Ascending aorta (tissue), 2 donors: ENCODE measurements at regions of chr10 and their contacts with region 1.

Region 1: GRCh38 chr10:71963756-71964668 is at the start of gene CHST3:
- DNase-seq: peak in 1 of 2 donors; percentile 78
- H3K4me3 ChIP-seq: peak within 1 kb of the TSS; percentile 88 to 99
- H3K27ac ChIP-seq: peak within 1 kb of the TSS; percentile 100
- H3K4me1 ChIP-seq: peaks cover 0 to 36% of the 10 kb centered on the region in 2 donors
- H3K27me3 ChIP-seq: no peaks in the 10 kb centered on the region
- CTCF ChIP-seq: peak in 1 of 3 experiments; percentile 1
- total RNA-seq, gene CHST3: 41.4 TPM

Region 2: GRCh38 chr10:71805776-71806703 is 158.0 kb before region 1 on chr10:
- intact Hi-C with region 1: no loop called
- DNase-seq: no peak
- H3K4me3 ChIP-seq: no peak overlapping the region
- H3K27ac ChIP-seq: no peak overlapping the region
- H3K4me1 ChIP-seq: no peaks in the 10 kb centered on the region
- H3K27me3 ChIP-seq: no peaks in the 10 kb centered on the region
- CTCF ChIP-seq: no peak

Region 3: DNA sequence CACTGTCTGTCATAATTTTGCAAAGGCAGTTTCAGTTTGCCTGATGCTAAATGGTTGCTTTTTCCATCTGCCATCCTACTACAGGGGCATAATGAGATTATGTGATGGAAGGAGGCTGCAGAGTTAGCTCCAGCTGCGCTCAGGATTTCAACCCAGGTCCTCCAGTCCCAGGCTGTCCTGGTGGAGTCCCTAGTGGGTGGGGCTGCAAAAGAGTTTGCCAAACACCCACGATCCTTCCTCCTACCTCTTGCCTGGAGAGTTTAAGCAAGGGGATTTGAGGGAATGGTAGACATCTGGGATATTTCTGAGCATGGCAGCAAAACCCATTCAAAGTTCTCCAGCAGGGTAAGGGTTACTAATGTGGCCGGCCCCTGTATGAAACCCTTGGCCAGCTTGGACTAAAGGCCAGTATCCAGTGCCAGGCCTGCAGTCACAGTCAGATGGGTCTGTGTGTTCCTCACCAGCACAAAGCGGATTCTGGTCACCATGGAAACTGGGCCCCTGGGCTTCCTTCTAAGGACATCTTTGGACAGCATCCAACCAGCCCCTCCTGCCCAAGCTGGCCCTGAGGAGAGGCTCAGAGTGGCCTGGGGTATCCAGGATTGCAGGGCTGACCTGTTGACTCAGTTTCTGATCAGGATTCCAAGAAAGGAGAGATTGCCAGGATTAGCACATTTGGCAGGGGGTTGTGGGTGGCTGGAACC is 42.5 kb before region 1 on chr10:
- intact Hi-C with region 1: no loop called
- DNase-seq: peak in 1 of 2 donors; percentile 84
- H3K4me3 ChIP-seq: no peak overlapping the region
- H3K27ac ChIP-seq: no peak overlapping the region
- H3K4me1 ChIP-seq: no peaks in the 10 kb centered on the region
- H3K27me3 ChIP-seq: no peaks in the 10 kb centered on the region
- CTCF ChIP-seq: no peak

Region 4: GRCh38 chr10:71974489-71975021 is 10.5 kb after region 1 on chr10:
- intact Hi-C with region 1: loop called (anchors 1 kb)
- DNase-seq: peak in 1 of 2 donors; percentile 85
- H3K4me3 ChIP-seq: peak overlapping the region in 1 of 2 donors; percentile 40
- H3K27ac ChIP-seq: peak overlapping the region; percentile 90 to 93
- H3K4me1 ChIP-seq: peaks cover 55 to 78% of the 10 kb centered on the region in 2 donors
- H3K27me3 ChIP-seq: no peaks in the 10 kb centered on the region
- CTCF ChIP-seq: no peak

Region 5: DNA sequence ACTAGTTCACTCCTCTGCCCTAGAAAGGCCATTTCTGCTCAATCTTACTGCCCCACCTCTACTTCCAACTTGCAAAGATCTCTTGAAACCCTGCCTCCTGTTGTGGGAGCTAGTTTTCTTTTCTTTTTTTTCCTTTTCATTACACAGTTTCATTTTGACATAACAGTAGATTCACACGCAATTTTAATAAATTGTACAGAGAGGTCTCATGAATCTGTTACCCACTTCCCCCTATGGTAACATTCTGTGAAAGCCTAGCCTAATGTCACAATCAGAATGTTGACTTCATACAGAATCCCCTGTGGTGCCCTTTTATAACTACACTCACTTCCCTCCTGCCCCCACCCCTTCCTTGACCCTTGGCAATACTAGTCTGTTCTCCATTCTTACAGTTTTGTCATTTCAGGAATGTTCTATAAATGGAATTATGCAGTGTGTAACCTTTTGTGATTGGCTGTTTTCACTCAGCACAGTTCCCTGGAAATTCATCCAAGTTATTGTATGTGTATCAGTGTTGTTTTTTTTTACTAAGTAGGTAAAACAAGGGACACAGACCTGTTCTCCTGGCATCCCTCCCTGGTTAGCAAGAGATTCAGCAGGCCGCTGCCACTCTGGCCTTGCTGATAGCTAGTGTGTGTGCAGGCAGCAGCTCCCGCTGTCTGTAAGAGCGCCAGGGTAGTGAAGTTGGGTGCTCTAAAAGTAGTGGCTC is 21.7 kb after region 1 on chr10:
- intact Hi-C with region 1: loop called (anchors 2 kb)
- DNase-seq: peak in 1 of 2 donors; percentile 91
- H3K4me3 ChIP-seq: peak overlapping the region in 1 of 2 donors; percentile 7
- H3K27ac ChIP-seq: peak overlapping the region; percentile 90 to 93
- H3K4me1 ChIP-seq: peaks cover 30 to 71% of the 10 kb centered on the region in 2 donors
- H3K27me3 ChIP-seq: no peaks in the 10 kb centered on the region
- CTCF ChIP-seq: peak in 2 of 3 experiments; percentile 20 to 29

Region 6: DNA sequence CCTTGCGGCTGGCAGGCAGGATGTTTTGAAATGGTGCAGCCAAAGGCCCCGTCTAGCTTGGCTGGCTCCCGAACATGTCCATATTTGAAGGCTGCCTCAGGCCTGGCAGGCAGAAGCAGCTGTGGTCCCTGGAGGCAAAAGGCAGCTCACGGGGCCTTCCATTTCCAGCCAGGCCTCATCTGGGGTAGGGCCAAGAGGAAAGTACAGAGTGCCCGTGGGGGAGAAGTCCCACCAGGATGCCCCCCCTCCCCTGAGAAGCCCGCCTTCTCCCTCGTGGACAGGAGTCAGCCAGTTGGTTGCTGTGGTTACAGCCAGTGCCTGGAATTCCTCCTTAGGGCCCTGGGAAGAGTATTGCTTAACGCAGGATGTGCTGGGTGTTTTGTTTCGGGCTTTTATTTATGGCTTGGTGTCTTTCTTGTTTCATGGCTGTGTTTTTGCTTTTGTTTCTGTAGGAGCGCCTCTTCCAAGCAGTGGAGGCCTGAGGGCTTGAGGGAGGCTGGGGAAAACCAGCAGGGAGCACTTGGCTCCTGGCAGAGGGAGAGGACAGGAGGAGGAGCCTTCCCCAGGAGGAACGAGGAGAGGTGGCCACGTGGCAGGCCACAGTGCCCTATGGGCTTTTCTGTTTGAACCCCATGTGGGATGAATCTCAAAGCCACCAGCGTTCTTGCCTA is 45.5 kb after region 1 on chr10:
- intact Hi-C with region 1: loop called (anchors 1 kb)
- DNase-seq: peak; percentile 93 to 99
- H3K4me3 ChIP-seq: peak overlapping the region in 1 of 2 donors; percentile 16
- H3K27ac ChIP-seq: peak overlapping the region; percentile 93 to 94
- H3K4me1 ChIP-seq: peaks cover 21 to 27% of the 10 kb centered on the region in 2 donors
- H3K27me3 ChIP-seq: no peaks in the 10 kb centered on the region
- CTCF ChIP-seq: no peak

Region 7: DNA sequence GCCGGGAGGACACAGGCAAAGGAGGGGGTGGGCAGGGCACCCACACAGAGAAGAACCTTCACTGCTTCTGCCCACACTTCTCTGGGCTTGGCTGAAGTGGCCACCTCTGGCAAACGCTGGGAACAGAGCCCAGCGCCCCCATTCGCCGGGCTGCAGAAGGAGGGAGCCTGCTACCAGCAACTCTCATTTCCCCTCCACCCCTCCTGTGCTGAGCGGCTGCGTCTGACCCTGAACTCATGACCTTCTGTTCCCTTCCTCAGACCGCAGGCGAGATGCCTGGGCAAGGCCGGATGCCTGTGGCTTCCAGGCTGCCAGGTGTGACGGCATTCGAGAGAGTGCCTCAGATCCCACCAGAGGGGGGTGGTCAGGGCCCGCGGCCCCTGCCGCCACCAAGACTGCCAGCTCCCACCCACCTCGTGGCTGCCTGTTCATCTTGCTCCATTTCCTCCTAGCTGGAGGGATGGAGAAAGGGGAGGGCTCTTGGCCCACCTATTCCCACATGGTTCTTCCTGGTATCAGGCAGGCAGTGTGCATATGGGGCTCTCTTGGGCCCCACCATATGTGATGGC is 370.9 kb after region 1 on chr10:
- intact Hi-C with region 1: loop called (anchors 5 kb)
- DNase-seq: peak; percentile 87 to 93
- H3K4me3 ChIP-seq: no peak overlapping the region
- H3K27ac ChIP-seq: peak overlapping the region; percentile 66 to 94
- H3K4me1 ChIP-seq: peaks cover 0 to 49% of the 10 kb centered on the region in 2 donors
- H3K27me3 ChIP-seq: no peaks in the 10 kb centered on the region
- CTCF ChIP-seq: no peak